B cell (primary cell): ENCODE measurements at regions of chr21 and their contacts with region 1.

Region 1: GRCh38 chr21:26170471-26171257 is at the start of gene APP:
- DNase-seq: peak; percentile 91
- ATAC-seq: peak; percentile 89
- H3K4me3 ChIP-seq: peak within 1 kb of the TSS; percentile 54 to 84 (median 82)
- H3K4me3 Mint-ChIP-seq: peak within 1 kb of the TSS; percentile 97
- H3K27ac ChIP-seq: peak within 1 kb of the TSS in 1 of 2 donors; percentile 74
- H3K27ac Mint-ChIP-seq: peak within 1 kb of the TSS; percentile 81
- H3K4me1 ChIP-seq: peaks cover 9 to 18% of the 10 kb centered on the region in 2 donors
- H3K4me1 Mint-ChIP-seq: peaks cover 15% of the 10 kb centered on the region
- H3K27me3 ChIP-seq: peaks cover 0 to 9% (median 2%) of the 10 kb centered on the region in 4 experiments
- H3K27me3 Mint-ChIP-seq: peaks cover 19% of the 10 kb centered on the region
- CTCF ChIP-seq: peak; percentile 96
- total RNA-seq, gene APP: 34.7 and 38.0 TPM in 2 replicates

Region 2: GRCh38 chr21:25734904-25735645 is 435.6 kb before region 1 on chr21 and contains the starts of genes ATP5PF and GABPA:
- CTCF ChIA-PET with region 1: no interaction called
- POLR2A ChIA-PET with region 1: no interaction called
- intact Hi-C with region 1: loop called (anchors 10 kb)
- DNase-seq: peak; percentile 99
- ATAC-seq: peak; percentile 83
- H3K4me3 ChIP-seq: peak within 1 kb of the TSS; percentile 69 to 99 (median 95)
- H3K4me3 Mint-ChIP-seq: peak within 1 kb of the TSS; percentile 100
- H3K27ac ChIP-seq: peak within 1 kb of the TSS; percentile 86 to 87
- H3K27ac Mint-ChIP-seq: peak within 1 kb of the TSS; percentile 100
- H3K4me1 ChIP-seq: peaks cover 44 to 46% of the 10 kb centered on the region in 2 donors
- H3K4me1 Mint-ChIP-seq: peaks cover 58% of the 10 kb centered on the region
- H3K27me3 ChIP-seq: no peaks in the 10 kb centered on the region
- H3K27me3 Mint-ChIP-seq: no peaks in the 10 kb centered on the region
- CTCF ChIP-seq: no peak
- total RNA-seq, gene ATP5PF: 34.1 and 36.6 TPM in 2 replicates
- total RNA-seq, gene GABPA: 29.7 and 32.9 TPM in 2 replicates

Region 3: GRCh38 chr21:25881525-25882376 is 288.9 kb before region 1 on chr21:
- CTCF ChIA-PET with region 1: interaction called, 16 read pairs
- POLR2A ChIA-PET with region 1: no interaction called
- intact Hi-C with region 1: loop called (anchors 1 kb)
- DNase-seq: peak; percentile 69
- ATAC-seq: peak; percentile 86
- H3K4me3 ChIP-seq: no peak overlapping the region
- H3K4me3 Mint-ChIP-seq: no peak overlapping the region
- H3K27ac ChIP-seq: no peak overlapping the region
- H3K27ac Mint-ChIP-seq: no peak overlapping the region
- H3K4me1 ChIP-seq: no peaks in the 10 kb centered on the region
- H3K4me1 Mint-ChIP-seq: no peaks in the 10 kb centered on the region
- H3K27me3 ChIP-seq: no peaks in the 10 kb centered on the region
- H3K27me3 Mint-ChIP-seq: no peaks in the 10 kb centered on the region
- CTCF ChIP-seq: peak; percentile 99

Region 4: GRCh38 chr21:25895565-25896205 is 275.0 kb before region 1 on chr21:
- CTCF ChIA-PET with region 1: interaction called, 43 read pairs
- POLR2A ChIA-PET with region 1: no interaction called
- intact Hi-C with region 1: loop called (anchors 1 kb)
- DNase-seq: peak; percentile 59
- ATAC-seq: peak; percentile 67
- H3K4me3 ChIP-seq: no peak overlapping the region
- H3K4me3 Mint-ChIP-seq: no peak overlapping the region
- H3K27ac ChIP-seq: no peak overlapping the region
- H3K27ac Mint-ChIP-seq: no peak overlapping the region
- H3K4me1 ChIP-seq: no peaks in the 10 kb centered on the region
- H3K4me1 Mint-ChIP-seq: peaks cover 3% of the 10 kb centered on the region
- H3K27me3 ChIP-seq: no peaks in the 10 kb centered on the region
- H3K27me3 Mint-ChIP-seq: no peaks in the 10 kb centered on the region
- CTCF ChIP-seq: peak; percentile 83

Region 5: DNA sequence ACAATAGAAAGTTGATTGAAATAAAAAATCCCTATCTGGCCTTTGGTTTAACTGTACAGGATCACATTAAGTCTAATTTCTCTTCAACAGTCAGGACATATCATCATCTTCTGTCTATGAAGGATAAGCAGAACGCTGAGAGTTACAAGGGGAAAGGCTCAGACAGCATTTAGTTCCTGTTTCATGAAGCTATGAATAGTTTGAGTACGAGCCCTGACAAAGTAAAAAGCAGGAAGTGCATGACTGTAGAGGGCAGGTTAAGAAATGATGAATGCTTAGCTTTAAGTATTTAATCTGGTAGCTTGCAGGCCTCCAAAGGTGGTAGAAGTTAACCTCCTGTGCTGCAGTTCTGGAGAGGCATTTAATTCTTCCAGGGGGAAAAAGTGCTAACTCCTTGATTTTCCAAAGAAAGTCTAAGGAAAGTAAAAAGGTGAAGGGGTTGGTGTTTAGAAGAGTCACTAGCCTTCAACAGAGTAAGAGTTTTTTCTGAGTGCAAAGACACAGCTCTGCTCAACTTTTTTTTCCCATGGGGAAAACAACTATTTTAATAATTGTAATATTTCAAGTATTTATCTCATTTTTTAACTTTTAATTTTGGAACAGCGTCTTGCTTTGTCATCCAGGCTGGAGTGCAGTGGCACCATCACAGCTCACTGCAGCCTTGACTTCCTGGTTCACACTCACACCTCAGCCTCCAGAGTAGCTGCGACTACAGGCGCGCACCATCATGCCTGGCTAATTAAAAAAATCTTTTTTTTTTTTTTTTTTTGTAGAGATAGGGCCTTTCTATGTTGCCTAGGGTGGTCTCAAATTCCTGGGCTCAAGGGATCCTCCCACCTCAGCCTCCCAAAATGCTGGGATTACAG is 202.9 kb before region 1 on chr21:
- CTCF ChIA-PET with region 1: interaction called, 8 read pairs
- POLR2A ChIA-PET with region 1: no interaction called
- intact Hi-C with region 1: loop called (anchors 5 kb)
- DNase-seq: peak; percentile 78
- ATAC-seq: peak; percentile 94
- H3K4me3 ChIP-seq: peak overlapping the region in 1 of 5 experiments; percentile 45
- H3K4me3 Mint-ChIP-seq: peak overlapping the region; percentile 80
- H3K27ac ChIP-seq: peak overlapping the region; percentile 76 to 95
- H3K27ac Mint-ChIP-seq: peak overlapping the region; percentile 99
- H3K4me1 ChIP-seq: peaks cover 26 to 32% of the 10 kb centered on the region in 2 donors
- H3K4me1 Mint-ChIP-seq: peaks cover 32% of the 10 kb centered on the region
- H3K27me3 ChIP-seq: no peaks in the 10 kb centered on the region
- H3K27me3 Mint-ChIP-seq: no peaks in the 10 kb centered on the region
- CTCF ChIP-seq: no peak

Region 6: DNA sequence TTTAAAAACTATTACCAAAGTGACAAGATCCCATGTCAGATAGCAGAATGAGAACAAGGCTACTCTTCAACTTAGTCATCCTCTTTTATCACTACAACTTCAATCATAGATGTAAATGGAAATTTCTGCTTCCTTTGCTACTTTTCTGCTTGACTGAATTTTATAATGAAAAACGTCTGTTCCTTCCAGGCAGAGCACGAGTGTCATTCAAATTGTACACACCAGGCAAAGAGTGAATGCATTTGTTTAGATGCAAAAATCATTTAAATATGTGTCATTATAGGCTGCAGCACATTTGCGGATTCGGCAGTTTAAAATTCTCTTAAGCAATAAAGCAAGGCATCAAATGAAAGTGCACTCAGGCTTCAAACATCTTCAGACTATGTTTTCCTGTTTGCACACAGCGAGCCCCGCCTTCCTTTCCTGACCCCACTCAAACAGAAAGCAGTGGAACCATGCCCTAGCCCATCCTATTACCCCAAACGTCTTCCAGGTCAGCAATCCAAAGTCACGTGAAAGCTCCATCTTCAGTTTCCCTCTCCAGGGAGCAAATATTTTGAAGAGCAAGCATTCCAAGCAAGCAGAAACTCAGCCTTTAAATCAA is 99.7 kb before region 1 on chr21:
- CTCF ChIA-PET with region 1: no interaction called
- POLR2A ChIA-PET with region 1: no interaction called
- intact Hi-C with region 1: loop called (anchors 10 kb)
- DNase-seq: peak; percentile 54
- ATAC-seq: peak; percentile 75
- H3K4me3 ChIP-seq: peak overlapping the region in 4 of 5 experiments; percentile 11 to 59 (median 48)
- H3K4me3 Mint-ChIP-seq: peak overlapping the region; percentile 85
- H3K27ac ChIP-seq: peak overlapping the region; percentile 39 to 67
- H3K27ac Mint-ChIP-seq: peak overlapping the region; percentile 87
- H3K4me1 ChIP-seq: peaks cover 17 to 26% of the 10 kb centered on the region in 2 donors
- H3K4me1 Mint-ChIP-seq: peaks cover 30% of the 10 kb centered on the region
- H3K27me3 ChIP-seq: no peaks in the 10 kb centered on the region
- H3K27me3 Mint-ChIP-seq: no peaks in the 10 kb centered on the region
- CTCF ChIP-seq: no peak

Region 7: GRCh38 chr21:26157801-26158200 is 12.9 kb before region 1 on chr21:
- CTCF ChIA-PET with region 1: interaction called, 11 read pairs
- POLR2A ChIA-PET with region 1: no interaction called
- intact Hi-C with region 1: no loop called
- DNase-seq: no peak
- ATAC-seq: no peak
- H3K4me3 ChIP-seq: no peak overlapping the region
- H3K4me3 Mint-ChIP-seq: no peak overlapping the region
- H3K27ac ChIP-seq: no peak overlapping the region
- H3K27ac Mint-ChIP-seq: no peak overlapping the region
- H3K4me1 ChIP-seq: peaks cover 0 to 8% of the 10 kb centered on the region in 2 donors
- H3K4me1 Mint-ChIP-seq: peaks cover 16% of the 10 kb centered on the region
- H3K27me3 ChIP-seq: no peaks in the 10 kb centered on the region
- H3K27me3 Mint-ChIP-seq: no peaks in the 10 kb centered on the region
- CTCF ChIP-seq: no peak